CD8-positive, alpha-beta T cell (primary cell): ENCODE measurements at regions of chr6 and their contacts with region 1.

Region 1: DNA sequence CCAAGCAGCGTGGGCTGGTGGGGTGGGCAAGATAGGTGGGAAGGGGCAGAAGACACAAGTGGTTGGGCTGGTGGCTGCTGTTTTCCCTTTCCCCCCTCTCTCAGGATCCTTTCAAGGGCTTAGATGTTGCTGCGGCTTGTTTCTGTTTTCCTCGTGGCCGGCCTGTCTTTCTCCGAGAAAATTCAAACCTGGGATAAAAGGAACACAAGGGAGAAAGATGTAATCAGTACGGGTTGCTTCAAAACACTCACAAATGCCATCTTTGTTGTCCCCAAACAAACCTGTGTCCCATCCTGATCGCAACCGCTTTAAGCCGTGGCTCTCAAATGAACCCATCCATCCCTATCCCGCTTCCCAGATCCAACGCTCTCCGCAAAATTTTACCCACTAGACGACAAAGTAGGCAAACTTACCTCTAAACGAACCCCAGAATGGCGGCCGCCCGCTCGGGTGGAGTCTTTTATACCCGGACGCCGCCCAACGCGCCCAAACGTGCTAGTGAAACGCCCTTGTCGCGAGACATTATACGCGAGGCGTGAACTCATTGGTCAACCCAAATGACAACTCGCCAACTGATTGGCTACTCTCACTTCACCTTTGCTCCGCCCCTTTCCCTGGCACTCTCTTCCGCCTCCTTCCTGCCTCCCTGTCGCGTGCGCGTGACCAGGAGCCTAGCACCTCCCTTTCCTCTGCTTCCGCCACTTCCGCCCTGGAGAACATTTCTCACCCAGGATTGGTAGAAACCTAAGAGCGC is at the start of gene PPP1R10:
- DNase-seq: peak; percentile 95 to 100 (median 97)
- ATAC-seq: peak; percentile 76
- H3K4me3 ChIP-seq: peak within 1 kb of the TSS; percentile 91 to 96
- H3K4me3 Mint-ChIP-seq: peak within 1 kb of the TSS; percentile 100
- H3K27ac ChIP-seq: peak within 1 kb of the TSS; percentile 99 to 100
- H3K27ac Mint-ChIP-seq: peak within 1 kb of the TSS; percentile 100
- H3K4me1 ChIP-seq: peaks cover 43% of the 10 kb centered on the region
- H3K4me1 Mint-ChIP-seq: peaks cover 45% of the 10 kb centered on the region
- H3K27me3 ChIP-seq: no peaks in the 10 kb centered on the region
- H3K27me3 Mint-ChIP-seq: no peaks in the 10 kb centered on the region
- CTCF ChIP-seq: no peak
- total RNA-seq, gene PPP1R10: 85.5 to 95.4 TPM

Region 2: GRCh38 chr6:30212865-30213666 is 403.9 kb before region 1 on chr6 and contains the start of gene TRIM26:
- CTCF ChIA-PET with region 1: no interaction called
- POLR2A ChIA-PET with region 1: no interaction called
- intact Hi-C with region 1: loop called in 1 of 2 experiments (anchors 10 kb)
- DNase-seq: peak; percentile 92 to 98 (median 96)
- ATAC-seq: peak; percentile 86
- H3K4me3 ChIP-seq: peak within 1 kb of the TSS; percentile 76 to 99
- H3K4me3 Mint-ChIP-seq: peak within 1 kb of the TSS; percentile 99
- H3K27ac ChIP-seq: peak within 1 kb of the TSS; percentile 96
- H3K27ac Mint-ChIP-seq: peak within 1 kb of the TSS; percentile 99
- H3K4me1 ChIP-seq: peaks cover 33% of the 10 kb centered on the region
- H3K4me1 Mint-ChIP-seq: peaks cover 63% of the 10 kb centered on the region
- H3K27me3 ChIP-seq: no peaks in the 10 kb centered on the region
- H3K27me3 Mint-ChIP-seq: no peaks in the 10 kb centered on the region
- CTCF ChIP-seq: no peak
- total RNA-seq, gene TRIM26: 54.8 to 56.8 TPM

Region 3: GRCh38 chr6:30508890-30509736 is 107.9 kb before region 1 on chr6:
- CTCF ChIA-PET with region 1: no interaction called
- POLR2A ChIA-PET with region 1: interaction called, 14 read pairs
- intact Hi-C with region 1: no loop called
- DNase-seq: peak in 3 of 9 experiments; percentile 43 to 88 (median 78)
- ATAC-seq: peak; percentile 81
- H3K4me3 ChIP-seq: peak overlapping the region; percentile 24 to 31
- H3K4me3 Mint-ChIP-seq: peak overlapping the region; percentile 62
- H3K27ac ChIP-seq: peak overlapping the region in 1 of 2 experiments; percentile 85
- H3K27ac Mint-ChIP-seq: peak overlapping the region; percentile 82
- H3K4me1 ChIP-seq: peaks cover 68% of the 10 kb centered on the region
- H3K4me1 Mint-ChIP-seq: peaks cover 62% of the 10 kb centered on the region
- H3K27me3 ChIP-seq: no peaks in the 10 kb centered on the region
- H3K27me3 Mint-ChIP-seq: no peaks in the 10 kb centered on the region
- CTCF ChIP-seq: no peak

Region 4: GRCh38 chr6:30571075-30571768 is 45.8 kb before region 1 on chr6 and contains the start of gene ABCF1:
- CTCF ChIA-PET with region 1: interaction called, 4 read pairs
- POLR2A ChIA-PET with region 1: interaction called, 56 read pairs
- intact Hi-C with region 1: loop called (anchors 1 kb)
- DNase-seq: peak; percentile 99 to 100 (median 100)
- ATAC-seq: peak; percentile 96
- H3K4me3 ChIP-seq: peak within 1 kb of the TSS; percentile 64 to 86
- H3K4me3 Mint-ChIP-seq: peak within 1 kb of the TSS; percentile 98
- H3K27ac ChIP-seq: peak within 1 kb of the TSS; percentile 90 to 98
- H3K27ac Mint-ChIP-seq: peak within 1 kb of the TSS; percentile 99
- H3K4me1 ChIP-seq: peaks cover 54% of the 10 kb centered on the region
- H3K4me1 Mint-ChIP-seq: peaks cover 69% of the 10 kb centered on the region
- H3K27me3 ChIP-seq: no peaks in the 10 kb centered on the region
- H3K27me3 Mint-ChIP-seq: no peaks in the 10 kb centered on the region
- CTCF ChIP-seq: no peak
- total RNA-seq, gene ABCF1: 121 to 130 TPM

Region 5: GRCh38 chr6:30672445-30673253 is 55.7 kb after region 1 on chr6 and contains the start of gene DHX16:
- CTCF ChIA-PET with region 1: interaction called, 6 read pairs
- POLR2A ChIA-PET with region 1: interaction called, 15 read pairs
- intact Hi-C with region 1: loop called in 1 of 2 experiments (anchors 1 kb)
- DNase-seq: peak; percentile 77 to 96 (median 90)
- ATAC-seq: peak; percentile 79
- H3K4me3 ChIP-seq: peak within 1 kb of the TSS; percentile 69 to 81
- H3K4me3 Mint-ChIP-seq: peak within 1 kb of the TSS; percentile 90
- H3K27ac ChIP-seq: peak within 1 kb of the TSS; percentile 51 to 71
- H3K27ac Mint-ChIP-seq: peak within 1 kb of the TSS; percentile 82
- H3K4me1 ChIP-seq: peaks cover 15% of the 10 kb centered on the region
- H3K4me1 Mint-ChIP-seq: peaks cover 38% of the 10 kb centered on the region
- H3K27me3 ChIP-seq: no peaks in the 10 kb centered on the region
- H3K27me3 Mint-ChIP-seq: no peaks in the 10 kb centered on the region
- CTCF ChIP-seq: peak; percentile 38
- total RNA-seq, gene DHX16: 15.8 to 17.9 TPM

Region 6: DNA sequence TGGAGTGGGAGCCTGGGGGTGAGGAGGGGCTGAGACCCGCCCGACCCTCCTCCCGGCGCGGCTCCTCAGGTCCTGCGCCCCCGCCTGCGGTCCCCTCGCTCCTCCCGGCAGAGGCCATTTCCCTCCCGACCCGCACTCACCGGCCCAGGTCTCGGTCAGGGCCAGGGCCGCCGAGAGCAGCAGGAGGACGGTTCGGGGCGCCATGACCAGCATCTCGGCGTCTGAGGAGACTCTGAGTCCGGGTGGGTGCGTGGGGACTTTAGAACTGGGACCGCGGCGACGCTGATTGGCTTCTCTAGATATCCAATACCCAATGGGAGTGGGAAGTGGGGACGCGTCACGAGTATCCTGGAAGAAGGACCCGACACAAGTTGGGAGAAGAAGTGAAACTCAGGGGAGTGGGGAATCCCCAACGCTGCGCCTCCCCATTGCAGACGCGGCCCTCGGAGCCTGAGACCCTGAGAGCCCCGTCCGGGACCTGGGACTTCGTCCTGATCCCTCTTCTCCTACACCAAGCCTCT is 740.0 kb after region 1 on chr6 and contains the start of gene HLA-B:
- CTCF ChIA-PET with region 1: no interaction called
- POLR2A ChIA-PET with region 1: no interaction called
- intact Hi-C with region 1: loop called (anchors 5 kb)
- DNase-seq: peak; percentile 65 to 98 (median 79)
- ATAC-seq: peak; percentile 80
- H3K4me3 ChIP-seq: peak within 1 kb of the TSS; percentile 55 to 92
- H3K4me3 Mint-ChIP-seq: peak within 1 kb of the TSS; percentile 100
- H3K27ac ChIP-seq: peak within 1 kb of the TSS; percentile 97 to 99
- H3K27ac Mint-ChIP-seq: peak within 1 kb of the TSS; percentile 100
- H3K4me1 ChIP-seq: peaks cover 48% of the 10 kb centered on the region
- H3K4me1 Mint-ChIP-seq: peaks cover 59% of the 10 kb centered on the region
- H3K27me3 ChIP-seq: no peaks in the 10 kb centered on the region
- H3K27me3 Mint-ChIP-seq: no peaks in the 10 kb centered on the region
- CTCF ChIP-seq: no peak
- total RNA-seq, gene HLA-B: 9,693 to 10,002 TPM